Activated naive CD4-positive, alpha-beta T cell treated with anti-CD3 and anti-CD28 coated beads for 36 hours (primary cell): ENCODE measurements at regions of chr9 and their contacts with region 1.

Region 1: DNA sequence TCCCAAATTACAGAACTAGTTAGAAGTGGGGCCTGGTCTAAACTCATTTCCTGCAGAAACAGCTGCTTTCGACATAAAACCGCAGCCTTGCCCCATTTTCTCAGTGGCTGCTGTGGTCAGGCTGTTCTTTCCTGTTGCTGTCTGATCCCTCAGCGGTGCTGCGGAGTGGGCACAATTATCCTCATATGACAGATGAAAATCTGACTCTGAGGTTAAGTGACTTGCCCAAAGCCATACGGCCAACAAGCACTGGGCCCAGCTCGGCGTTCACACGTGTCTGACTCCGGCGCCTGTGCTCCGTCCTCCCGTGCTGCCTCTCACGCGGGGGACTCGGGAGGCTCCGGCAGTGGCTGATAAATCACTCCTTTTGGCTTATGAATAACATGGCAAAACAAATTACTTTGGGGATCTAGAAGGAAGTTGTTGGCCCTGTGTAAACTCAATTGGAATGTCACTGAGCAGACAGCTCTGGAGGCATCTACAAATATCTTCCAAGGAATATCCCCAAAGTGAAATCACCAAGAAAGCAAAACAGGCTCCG is 142.6 kb upstream of the LMX1B start:
- DNase-seq: peak; percentile 92
- H3K4me3 Mint-ChIP-seq: peak overlapping the region; percentile 33
- H3K27ac Mint-ChIP-seq: peak overlapping the region; percentile 20
- H3K4me1 Mint-ChIP-seq: peaks cover 46% of the 10 kb centered on the region
- H3K27me3 Mint-ChIP-seq: no peaks in the 10 kb centered on the region

Region 2: GRCh38 chr9:126411225-126411947 is 59.8 kb before region 1 on chr9:
- CTCF ChIA-PET with region 1: no interaction called
- intact Hi-C with region 1: loop called (anchors 1 kb)
- DNase-seq: peak; percentile 68
- H3K4me3 Mint-ChIP-seq: peak overlapping the region; percentile 35
- H3K27ac Mint-ChIP-seq: peak overlapping the region; percentile 72
- H3K4me1 Mint-ChIP-seq: peaks cover 33% of the 10 kb centered on the region
- H3K27me3 Mint-ChIP-seq: no peaks in the 10 kb centered on the region

Region 3: GRCh38 chr9:126615175-126615814 is 144.1 kb after region 1 on chr9:
- CTCF ChIA-PET with region 1: no interaction called
- intact Hi-C with region 1: no loop called
- DNase-seq: peak; percentile 39
- H3K4me3 Mint-ChIP-seq: no peak overlapping the region
- H3K27ac Mint-ChIP-seq: no peak overlapping the region
- H3K4me1 Mint-ChIP-seq: peaks cover 28% of the 10 kb centered on the region
- H3K27me3 Mint-ChIP-seq: peaks cover 75% of the 10 kb centered on the region